Psoas muscle (tissue), 8 donors: ENCODE measurements at regions of chr1 and their contacts with region 1.

Region 1: GRCh38 chr1:88877382-88877825 is 14.0 kb downstream of the GTF2B start:
- DNase-seq: no peak
- ATAC-seq: peak in 1 of 4 donors; percentile 39
- H3K4me3 ChIP-seq: no peak overlapping the region
- H3K27ac ChIP-seq: no peak overlapping the region
- H3K4me1 ChIP-seq: peaks cover 12% of the 10 kb centered on the region
- H3K27me3 ChIP-seq: no peaks in the 10 kb centered on the region
- CTCF ChIP-seq: peak; percentile 57

Region 2: DNA sequence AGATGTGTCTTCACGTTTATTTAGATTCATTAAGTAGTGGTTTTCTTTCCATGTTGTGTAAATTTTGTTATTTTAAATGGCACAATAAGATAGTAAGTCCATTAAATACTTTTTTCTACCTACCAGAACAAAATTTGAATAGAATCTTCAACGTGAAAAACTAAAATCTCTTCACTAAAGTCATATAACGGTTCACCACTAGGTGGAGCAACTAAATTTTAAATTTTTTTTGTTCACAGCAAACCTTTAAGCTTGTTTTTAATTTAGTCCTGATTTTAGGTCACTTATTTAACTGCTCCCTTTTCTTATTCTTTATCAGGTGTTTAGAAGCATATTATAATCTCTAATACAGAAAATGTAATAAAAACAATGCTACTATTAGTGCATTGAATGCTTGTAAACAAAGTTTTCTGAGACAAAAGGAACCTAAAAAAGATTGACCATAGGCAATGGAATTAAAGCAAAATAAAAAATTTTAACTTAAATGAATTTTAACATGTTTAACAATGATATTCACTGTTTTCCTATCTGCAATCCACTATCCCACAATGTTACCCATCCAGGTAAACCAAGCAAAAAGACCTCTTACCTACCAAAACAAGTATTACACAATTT is 221.6 kb before region 1 on chr1:
- intact Hi-C with region 1: loop called (anchors 5 to 10 kb)
- DNase-seq: no peak
- ATAC-seq: no peak
- H3K4me3 ChIP-seq: no peak overlapping the region
- H3K27ac ChIP-seq: no peak overlapping the region
- H3K4me1 ChIP-seq: no peaks in the 10 kb centered on the region
- H3K27me3 ChIP-seq: no peaks in the 10 kb centered on the region
- CTCF ChIP-seq: peak; percentile 74

Region 3: GRCh38 chr1:88698140-88698539 is 179.3 kb before region 1 on chr1:
- intact Hi-C with region 1: loop called in 1 of 2 experiments (anchors 10 kb)
- DNase-seq: no peak
- ATAC-seq: no peak
- H3K4me3 ChIP-seq: no peak overlapping the region
- H3K27ac ChIP-seq: no peak overlapping the region
- H3K4me1 ChIP-seq: peaks cover 20% of the 10 kb centered on the region
- H3K27me3 ChIP-seq: no peaks in the 10 kb centered on the region
- CTCF ChIP-seq: no peak

Region 4: DNA sequence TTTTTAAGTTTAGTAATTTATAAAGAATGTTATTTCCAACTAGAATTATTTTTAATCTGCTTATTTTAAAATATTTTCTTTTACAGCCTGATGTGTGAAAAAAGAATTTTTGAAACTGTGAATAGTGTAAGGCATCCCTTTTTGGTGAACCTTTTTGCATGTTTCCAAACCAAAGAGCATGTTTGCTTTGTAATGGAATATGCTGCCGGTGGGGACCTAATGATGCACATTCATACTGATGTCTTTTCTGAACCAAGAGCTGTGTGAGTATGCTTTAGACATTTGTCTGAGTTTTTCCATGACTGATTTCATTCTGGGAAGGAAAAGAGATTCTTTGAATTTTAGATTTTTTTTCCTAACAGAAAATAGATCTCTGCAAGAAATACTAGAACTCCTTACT is 63.9 kb before region 1 on chr1:
- intact Hi-C with region 1: no loop called
- DNase-seq: no peak
- ATAC-seq: no peak
- H3K4me3 ChIP-seq: no peak overlapping the region
- H3K27ac ChIP-seq: no peak overlapping the region
- H3K4me1 ChIP-seq: no peaks in the 10 kb centered on the region
- H3K27me3 ChIP-seq: no peaks in the 10 kb centered on the region
- CTCF ChIP-seq: no peak